H1 (cell line): ENCODE measurements at regions of chr7 and their contacts with region 1.

Region 1: GRCh38 chr7:74026903-74027551 is 946 bp upstream of the ELN start:
- DNase-seq: peak; percentile 31 to 97
- H3K4me3 ChIP-seq: no peak overlapping the region
- H3K27ac ChIP-seq: no peak overlapping the region
- H3K4me1 ChIP-seq: peaks cover 0 to 24% (median 17%) of the 10 kb centered on the region in 4 experiments; a peak in 6 of 7 replicates
- H3K27me3 ChIP-seq: peaks cover 0 to 9% (median 4%) of the 10 kb centered on the region in 4 experiments; a peak in 3 of 7 replicates
- CTCF ChIP-seq: peak in 2 of 3 experiments; percentile 89 to 92; a peak in 3 of 4 replicates
- EP300 ChIP-seq: no peak
- POLR2A ChIP-seq: no peak
- RAD21 ChIP-seq: peak; percentile 72 to 84

Region 2: GRCh38 chr7:73351447-73352167 is 675.4 kb before region 1 on chr7:
- CTCF ChIA-PET with region 1: no interaction called
- POLR2A ChIA-PET with region 1: no interaction called
- DNase-seq: no peak
- H3K4me3 ChIP-seq: no peak overlapping the region
- H3K27ac ChIP-seq: no peak overlapping the region
- H3K4me1 ChIP-seq: peaks cover 0 to 9% (median 0%) of the 10 kb centered on the region in 4 experiments; a peak in 3 of 7 replicates
- H3K27me3 ChIP-seq: no peaks in the 10 kb centered on the region
- CTCF ChIP-seq: no peak
- EP300 ChIP-seq: no peak
- POLR2A ChIP-seq: no peak
- RAD21 ChIP-seq: no peak

Region 3: DNA sequence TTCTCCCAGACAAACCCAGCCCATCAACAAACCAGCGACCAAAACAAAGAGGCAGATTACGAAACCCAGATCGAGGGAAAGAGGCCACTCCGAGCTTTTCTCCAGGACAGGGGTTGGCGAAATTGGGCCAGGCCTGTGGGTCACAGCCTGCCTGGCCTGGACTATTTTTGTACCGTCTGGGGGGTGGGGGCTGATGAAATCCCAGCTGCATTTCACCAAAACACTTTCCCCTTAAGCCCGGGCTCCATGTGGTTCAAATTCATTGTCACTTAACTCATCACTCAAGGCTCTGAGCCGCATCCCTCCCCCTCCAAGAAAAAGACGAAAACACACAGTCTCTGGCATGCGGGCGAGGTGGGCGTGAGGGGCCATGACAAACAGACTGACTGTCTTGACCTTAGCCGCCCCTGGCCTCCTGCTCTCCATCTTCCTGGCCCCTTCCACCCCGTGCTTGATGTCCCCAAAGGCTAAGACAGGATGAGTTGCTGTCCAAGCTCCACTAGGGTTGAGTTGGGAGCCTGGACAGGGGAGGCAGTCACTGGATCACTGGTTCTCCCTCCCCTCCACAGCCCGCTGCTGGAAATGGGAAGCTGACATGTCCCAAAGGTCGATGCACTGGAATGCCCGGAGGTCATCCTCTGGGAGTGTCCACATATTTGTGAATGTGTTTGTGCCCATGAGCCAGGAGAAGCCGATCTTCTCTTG is 146.9 kb before region 1 on chr7:
- CTCF ChIA-PET with region 1: interaction called, 34 read pairs
- POLR2A ChIA-PET with region 1: no interaction called
- DNase-seq: no peak
- H3K4me3 ChIP-seq: no peak overlapping the region
- H3K27ac ChIP-seq: no peak overlapping the region
- H3K4me1 ChIP-seq: no peaks in the 10 kb centered on the region
- H3K27me3 ChIP-seq: no peaks in the 10 kb centered on the region
- CTCF ChIP-seq: no peak
- EP300 ChIP-seq: no peak
- POLR2A ChIP-seq: no peak
- RAD21 ChIP-seq: no peak

Region 4: DNA sequence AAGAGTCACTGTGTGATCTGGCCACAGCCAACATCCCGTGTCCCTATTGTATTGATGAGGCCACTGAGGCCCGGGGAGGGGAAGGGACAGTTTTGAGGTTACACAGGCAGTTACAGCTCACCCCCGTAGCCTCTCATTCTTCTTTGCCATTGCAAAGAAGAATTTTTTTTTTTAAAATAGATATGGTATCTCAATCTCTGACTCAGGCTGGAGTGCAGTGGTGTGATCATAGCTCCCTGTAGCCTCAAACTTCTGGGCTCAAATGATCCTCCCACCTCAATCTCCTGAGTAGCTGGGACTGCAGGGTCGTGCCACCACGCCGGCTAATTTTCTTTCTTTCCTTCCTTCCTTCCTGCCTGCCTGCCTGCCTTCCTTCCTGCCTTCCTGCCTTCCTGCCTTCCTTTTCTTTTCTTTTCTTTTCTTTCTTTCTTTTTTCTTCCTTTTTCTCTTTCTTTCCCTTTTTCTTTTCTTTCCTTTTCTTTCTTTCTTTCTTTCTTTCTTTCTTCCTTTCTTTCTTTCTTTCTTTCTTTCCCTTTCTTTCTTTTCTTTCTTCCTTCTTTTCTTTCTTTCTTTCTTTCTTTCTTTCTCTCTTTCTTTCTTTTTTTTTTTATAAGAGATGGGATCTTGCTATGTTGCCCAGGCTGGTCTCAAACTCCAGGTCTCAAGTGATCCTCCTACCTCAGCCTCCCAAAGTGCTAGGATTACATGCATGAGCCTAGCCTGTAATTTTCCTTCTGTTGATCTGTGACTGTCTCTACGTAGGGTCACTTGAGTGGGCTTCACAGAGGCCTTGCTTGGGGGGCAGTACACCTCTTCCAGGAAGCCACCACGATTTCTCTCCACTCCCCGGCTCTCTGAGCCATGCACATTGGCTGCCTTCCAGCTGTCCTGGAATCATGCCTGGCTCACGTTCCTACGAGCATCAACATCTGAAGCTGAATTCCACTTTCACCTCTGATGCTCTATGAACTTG is 134.7 kb before region 1 on chr7:
- CTCF ChIA-PET with region 1: interaction called, 12 read pairs
- POLR2A ChIA-PET with region 1: no interaction called
- DNase-seq: no peak
- H3K4me3 ChIP-seq: no peak overlapping the region
- H3K27ac ChIP-seq: no peak overlapping the region
- H3K4me1 ChIP-seq: peaks cover 0 to 4% (median 0%) of the 10 kb centered on the region in 4 experiments; a peak in 1 of 7 replicates
- H3K27me3 ChIP-seq: no peaks in the 10 kb centered on the region
- CTCF ChIP-seq: no peak
- EP300 ChIP-seq: no peak
- POLR2A ChIP-seq: no peak
- RAD21 ChIP-seq: no peak

Region 5: GRCh38 chr7:73978661-73979563 is 48.1 kb before region 1 on chr7:
- CTCF ChIA-PET with region 1: interaction called, 18 read pairs
- POLR2A ChIA-PET with region 1: no interaction called
- DNase-seq: peak; percentile 29 to 81
- H3K4me3 ChIP-seq: no peak overlapping the region
- H3K27ac ChIP-seq: no peak overlapping the region
- H3K4me1 ChIP-seq: no peaks in the 10 kb centered on the region; a peak in 1 of 7 replicates
- H3K27me3 ChIP-seq: no peaks in the 10 kb centered on the region
- CTCF ChIP-seq: peak; percentile 79 to 92 (median 89)
- EP300 ChIP-seq: no peak
- POLR2A ChIP-seq: no peak
- RAD21 ChIP-seq: peak; percentile 79 to 85

Region 6: DNA sequence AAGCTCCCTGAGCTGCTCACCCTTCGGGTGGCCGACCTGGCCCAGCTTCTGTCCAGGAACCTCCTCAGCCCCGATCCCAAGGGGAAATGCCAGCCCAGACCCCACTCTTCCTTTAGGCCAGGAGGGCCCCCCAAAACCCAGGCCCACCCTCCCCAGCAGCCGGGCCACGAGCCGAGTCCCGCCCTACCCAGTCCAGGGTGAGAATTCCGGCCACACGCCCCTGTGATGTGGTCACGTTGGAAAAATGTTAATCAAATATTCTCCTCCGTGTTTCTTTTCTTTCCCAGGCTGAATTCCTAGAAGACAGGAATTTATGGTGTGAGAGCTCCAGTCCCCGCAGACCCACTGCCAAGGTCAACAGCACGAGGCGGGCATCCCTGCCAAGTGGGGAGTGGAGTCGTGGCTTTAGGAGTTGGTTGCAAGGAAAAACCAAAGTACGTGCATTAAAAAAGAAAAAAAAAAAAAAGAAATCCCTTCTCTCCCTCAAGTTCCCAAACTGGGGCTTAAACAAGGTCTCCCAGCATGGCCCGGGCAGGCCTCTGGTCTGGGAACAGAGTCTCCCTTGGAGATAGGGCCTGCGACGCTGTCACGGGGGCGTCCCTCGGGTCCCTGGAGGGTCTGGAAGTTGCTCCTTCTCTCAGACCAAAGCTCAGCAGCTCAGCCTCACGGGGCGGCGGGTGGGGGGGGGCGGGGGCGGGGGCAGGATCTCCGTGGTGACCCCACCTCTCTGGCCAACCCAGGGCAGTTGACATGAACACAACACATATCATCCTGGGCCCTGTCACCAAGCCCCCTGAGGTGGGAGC is 27.2 kb before region 1 on chr7:
- CTCF ChIA-PET with region 1: interaction called, 28 read pairs
- POLR2A ChIA-PET with region 1: no interaction called
- DNase-seq: no peak
- H3K4me3 ChIP-seq: no peak overlapping the region
- H3K27ac ChIP-seq: no peak overlapping the region
- H3K4me1 ChIP-seq: no peaks in the 10 kb centered on the region; a peak in 1 of 7 replicates
- H3K27me3 ChIP-seq: no peaks in the 10 kb centered on the region
- CTCF ChIP-seq: no peak
- EP300 ChIP-seq: no peak
- POLR2A ChIP-seq: no peak
- RAD21 ChIP-seq: no peak

Region 7: GRCh38 chr7:74043523-74043951 is 16.5 kb after region 1 on chr7:
- CTCF ChIA-PET with region 1: interaction called, 58 read pairs
- POLR2A ChIA-PET with region 1: interaction called, 5 read pairs
- DNase-seq: no peak
- H3K4me3 ChIP-seq: peak overlapping the region in 1 of 4 experiments; percentile 26; a peak in 1 of 8 replicates
- H3K27ac ChIP-seq: peak overlapping the region; percentile 52; the same call in 1 of the 2 replicates
- H3K4me1 ChIP-seq: peaks cover 0 to 22% (median 18%) of the 10 kb centered on the region in 4 experiments; a peak in 6 of 7 replicates
- H3K27me3 ChIP-seq: no peaks in the 10 kb centered on the region
- CTCF ChIP-seq: no peak
- EP300 ChIP-seq: peak in 1 of 2 experiments; percentile 49; a peak in 1 of 3 replicates
- POLR2A ChIP-seq: 0 out of 3 replicates have a peak, but pooled peaks of 1 of the 2 experiments have one; percentile 29
- RAD21 ChIP-seq: no peak

Region 8: GRCh38 chr7:74068393-74069085 is 41.5 kb after region 1 on chr7:
- CTCF ChIA-PET with region 1: interaction called, 12 read pairs
- POLR2A ChIA-PET with region 1: no interaction called
- DNase-seq: no peak
- H3K4me3 ChIP-seq: no peak overlapping the region
- H3K27ac ChIP-seq: no peak overlapping the region
- H3K4me1 ChIP-seq: peaks cover 0 to 11% (median 3%) of the 10 kb centered on the region in 4 experiments; a peak in 3 of 7 replicates
- H3K27me3 ChIP-seq: no peaks in the 10 kb centered on the region
- CTCF ChIP-seq: no peak
- EP300 ChIP-seq: no peak
- POLR2A ChIP-seq: no peak
- RAD21 ChIP-seq: no peak

Region 9: GRCh38 chr7:74094224-74095101 is 67.4 kb after region 1 on chr7:
- CTCF ChIA-PET with region 1: no interaction called
- POLR2A ChIA-PET with region 1: no interaction called
- DNase-seq: peak; percentile 79 to 87
- H3K4me3 ChIP-seq: peak overlapping the region; percentile 1 to 51 (median 20); a peak in 6 of 8 replicates
- H3K27ac ChIP-seq: peak overlapping the region; percentile 52; the same call in 1 of the 2 replicates
- H3K4me1 ChIP-seq: peaks cover 8 to 31% (median 26%) of the 10 kb centered on the region in 4 experiments
- H3K27me3 ChIP-seq: no peaks in the 10 kb centered on the region
- CTCF ChIP-seq: no peak
- EP300 ChIP-seq: no peak
- POLR2A ChIP-seq: 0 out of 3 replicates have a peak, but pooled peaks of 1 of the 2 experiments have one; percentile 36
- RAD21 ChIP-seq: peak in 1 of 2 experiments; percentile 14; a peak in 1 of 4 replicates

Region 10: GRCh38 chr7:74104703-74105102 is 77.7 kb after region 1 on chr7:
- CTCF ChIA-PET with region 1: no interaction called
- POLR2A ChIA-PET with region 1: no interaction called
- DNase-seq: no peak
- H3K4me3 ChIP-seq: no peak overlapping the region
- H3K27ac ChIP-seq: no peak overlapping the region
- H3K4me1 ChIP-seq: no peaks in the 10 kb centered on the region
- H3K27me3 ChIP-seq: no peaks in the 10 kb centered on the region
- CTCF ChIP-seq: no peak
- EP300 ChIP-seq: no peak
- POLR2A ChIP-seq: no peak
- RAD21 ChIP-seq: no peak

Region 11: GRCh38 chr7:74343281-74344127 is 316.5 kb after region 1 on chr7:
- CTCF ChIA-PET with region 1: no interaction called
- POLR2A ChIA-PET with region 1: no interaction called
- DNase-seq: no peak
- H3K4me3 ChIP-seq: no peak overlapping the region
- H3K27ac ChIP-seq: no peak overlapping the region
- H3K4me1 ChIP-seq: no peaks in the 10 kb centered on the region
- H3K27me3 ChIP-seq: no peaks in the 10 kb centered on the region
- CTCF ChIP-seq: no peak
- EP300 ChIP-seq: no peak
- POLR2A ChIP-seq: no peak
- RAD21 ChIP-seq: no peak